Activated CD4-positive, alpha-beta memory T cell treated with anti-CD3 and anti-CD28 coated beads, Interleukin-2, amount 10 ng/mL, durations not matched to agents 7 days and 5 days (primary cell): ENCODE measurements at regions of chr12 and their contacts with region 1.

Region 1: GRCh38 chr12:127108360-127109215 is 1158.4 kb upstream of the TMEM132C start:
- DNase-seq: peak; percentile 58
- H3K4me3 Mint-ChIP-seq: no peak overlapping the region
- H3K27ac Mint-ChIP-seq: no peak overlapping the region
- H3K4me1 Mint-ChIP-seq: peaks cover 4% of the 10 kb centered on the region
- H3K27me3 Mint-ChIP-seq: peaks cover 16% of the 10 kb centered on the region

Region 2: GRCh38 chr12:127125607-127126259 is 17.1 kb after region 1 on chr12:
- CTCF ChIA-PET with region 1: no interaction called
- POLR2A ChIA-PET with region 1: no interaction called
- DNase-seq: peak; percentile 47
- H3K4me3 Mint-ChIP-seq: no peak overlapping the region
- H3K27ac Mint-ChIP-seq: no peak overlapping the region
- H3K4me1 Mint-ChIP-seq: peaks cover 8% of the 10 kb centered on the region
- H3K27me3 Mint-ChIP-seq: peaks cover 1% of the 10 kb centered on the region

Region 3: GRCh38 chr12:127293507-127294310 is 185.1 kb after region 1 on chr12:
- CTCF ChIA-PET with region 1: interaction called, 13 read pairs
- POLR2A ChIA-PET with region 1: no interaction called
- DNase-seq: peak; percentile 64
- H3K4me3 Mint-ChIP-seq: no peak overlapping the region
- H3K27ac Mint-ChIP-seq: no peak overlapping the region
- H3K4me1 Mint-ChIP-seq: no peaks in the 10 kb centered on the region
- H3K27me3 Mint-ChIP-seq: no peaks in the 10 kb centered on the region

Region 4: DNA sequence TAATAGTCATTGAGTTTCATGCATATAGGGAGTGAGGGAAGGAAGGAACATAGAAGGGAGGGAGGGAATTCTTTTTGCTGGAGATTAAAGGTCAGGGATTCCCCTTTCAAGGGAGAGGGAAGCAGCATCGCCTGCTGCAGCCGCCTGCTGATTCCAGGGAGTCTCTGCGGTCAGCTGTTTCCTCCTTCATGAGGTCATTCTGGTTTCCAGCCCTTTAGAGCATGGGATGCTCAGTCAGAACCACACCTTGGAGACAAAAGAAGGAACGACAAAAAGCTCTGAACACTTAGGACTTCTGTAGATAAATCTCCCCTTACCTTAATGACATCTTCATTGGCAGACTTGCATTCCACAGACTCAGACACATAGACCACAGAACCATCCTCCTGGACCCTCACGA is 235.4 kb after region 1 on chr12:
- CTCF ChIA-PET with region 1: no interaction called
- POLR2A ChIA-PET with region 1: no interaction called
- DNase-seq: no peak
- H3K4me3 Mint-ChIP-seq: no peak overlapping the region
- H3K27ac Mint-ChIP-seq: no peak overlapping the region
- H3K4me1 Mint-ChIP-seq: no peaks in the 10 kb centered on the region
- H3K27me3 Mint-ChIP-seq: no peaks in the 10 kb centered on the region

Region 5: GRCh38 chr12:127363392-127363791 is 254.8 kb after region 1 on chr12:
- CTCF ChIA-PET with region 1: interaction called, 10 read pairs
- POLR2A ChIA-PET with region 1: no interaction called
- DNase-seq: no peak
- H3K4me3 Mint-ChIP-seq: no peak overlapping the region
- H3K27ac Mint-ChIP-seq: no peak overlapping the region
- H3K4me1 Mint-ChIP-seq: no peaks in the 10 kb centered on the region
- H3K27me3 Mint-ChIP-seq: no peaks in the 10 kb centered on the region

Region 6: GRCh38 chr12:127381048-127381668 is 272.6 kb after region 1 on chr12:
- CTCF ChIA-PET with region 1: interaction called, 20 read pairs
- POLR2A ChIA-PET with region 1: interaction called, 3 read pairs
- DNase-seq: peak; percentile 56
- H3K4me3 Mint-ChIP-seq: no peak overlapping the region
- H3K27ac Mint-ChIP-seq: no peak overlapping the region
- H3K4me1 Mint-ChIP-seq: peaks cover 4% of the 10 kb centered on the region
- H3K27me3 Mint-ChIP-seq: peaks cover 2% of the 10 kb centered on the region

Region 7: GRCh38 chr12:127677537-127678131 is 569.0 kb after region 1 on chr12:
- CTCF ChIA-PET with region 1: interaction called, 21 read pairs
- POLR2A ChIA-PET with region 1: no interaction called
- DNase-seq: peak; percentile 61
- H3K4me3 Mint-ChIP-seq: no peak overlapping the region
- H3K27ac Mint-ChIP-seq: no peak overlapping the region
- H3K4me1 Mint-ChIP-seq: no peaks in the 10 kb centered on the region
- H3K27me3 Mint-ChIP-seq: no peaks in the 10 kb centered on the region